Left ventricle myocardium inferior (tissue), 1 donor: ENCODE measurements at regions of chr10 and their contacts with region 1.

Region 1: GRCh38 chr10:14074057-14074884 is 256.5 kb downstream of the FRMD4A start:
- DNase-seq: peak; percentile 84
- H3K4me3 ChIP-seq: peak overlapping the region; percentile 53
- H3K27ac ChIP-seq: peak overlapping the region; percentile 67
- H3K4me1 ChIP-seq: peaks cover 17% of the 10 kb centered on the region
- H3K27me3 ChIP-seq: no peaks in the 10 kb centered on the region
- CTCF ChIP-seq: no peak

Region 2: DNA sequence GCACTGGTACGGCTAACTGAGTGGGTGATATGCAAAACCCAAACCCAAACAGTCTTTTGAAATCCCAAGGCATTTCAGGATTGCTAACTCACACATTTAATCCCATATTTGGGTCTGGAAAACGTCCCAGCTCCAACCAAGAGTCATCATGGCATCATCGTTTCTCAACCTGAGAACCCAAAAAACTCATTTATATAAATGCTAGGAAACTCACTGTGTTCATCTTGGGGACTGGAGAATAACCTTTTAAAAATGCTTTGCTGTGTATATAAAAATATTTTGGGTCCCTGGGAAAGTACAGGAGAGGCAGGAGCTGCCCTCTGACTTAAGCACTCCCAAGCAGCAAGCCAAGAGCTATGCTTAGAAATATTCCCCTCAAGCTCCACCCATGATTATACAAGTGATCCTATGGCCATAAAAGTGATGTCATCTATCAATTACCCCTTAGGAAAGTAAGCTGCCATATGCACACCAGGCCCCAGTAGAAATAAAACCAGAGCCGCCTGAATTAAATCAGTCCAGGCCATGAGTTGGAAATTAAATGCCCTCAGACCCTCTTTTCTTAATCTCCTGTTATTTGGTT is 95.6 kb before region 1 on chr10:
- intact Hi-C with region 1: no loop called
- DNase-seq: no peak
- H3K4me3 ChIP-seq: no peak overlapping the region
- H3K27ac ChIP-seq: no peak overlapping the region
- H3K4me1 ChIP-seq: peaks cover 8% of the 10 kb centered on the region
- H3K27me3 ChIP-seq: peaks cover 5% of the 10 kb centered on the region
- CTCF ChIP-seq: no peak

Region 3: GRCh38 chr10:14024329-14025202 is 49.7 kb before region 1 on chr10:
- intact Hi-C with region 1: loop called (anchors 10 kb)
- DNase-seq: no peak
- H3K4me3 ChIP-seq: peak overlapping the region; percentile 41
- H3K27ac ChIP-seq: peak overlapping the region; percentile 2
- H3K4me1 ChIP-seq: peaks cover 5% of the 10 kb centered on the region
- H3K27me3 ChIP-seq: peaks cover 8% of the 10 kb centered on the region
- CTCF ChIP-seq: no peak